Cardiac septum (tissue), 1 donor: ENCODE measurements at regions of chr1 and their contacts with region 1.

Region 1: DNA sequence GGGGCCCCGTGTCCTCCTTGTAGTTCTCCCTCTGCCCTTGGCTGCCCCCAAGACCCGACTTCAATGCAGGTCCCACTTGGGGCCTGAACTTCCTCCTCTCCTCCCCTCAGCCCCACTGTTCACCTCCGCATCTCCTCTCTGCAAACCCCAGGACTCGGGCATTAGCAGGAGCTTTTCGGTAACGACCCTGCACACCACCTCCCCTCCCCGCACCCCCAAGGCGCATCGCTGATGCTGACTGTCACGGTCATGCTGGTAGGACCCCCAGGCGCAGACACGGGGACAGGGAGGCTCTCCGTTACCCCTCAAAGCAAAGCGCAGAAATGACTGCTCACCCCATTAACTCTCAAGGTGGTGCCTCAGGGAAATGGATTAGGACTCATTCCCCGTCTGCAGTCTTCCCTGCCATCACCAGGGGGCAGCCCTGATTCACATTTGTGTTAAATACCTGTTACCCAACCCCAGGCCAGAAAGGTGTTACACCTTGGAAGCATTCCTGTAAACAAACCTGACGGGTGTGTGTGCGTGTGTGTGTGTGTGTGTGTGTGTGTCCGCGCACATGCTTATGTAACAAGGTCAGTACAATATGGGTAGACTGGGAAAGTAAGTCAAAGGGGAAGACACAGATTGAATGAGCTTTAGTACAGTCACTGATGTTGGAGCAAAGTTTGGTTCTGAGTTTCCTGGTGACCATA is 6.4 kb upstream of the GUCA2B start:
- DNase-seq: no peak

Region 2: GRCh38 chr1:42173155-42173933 is 26.6 kb after region 1 on chr1:
- intact Hi-C with region 1: loop called (anchors 1 kb)
- DNase-seq: peak; percentile 87

Region 3: GRCh38 chr1:42747125-42747524 is 600.4 kb after region 1 on chr1:
- intact Hi-C with region 1: loop called (anchors 5 kb)
- DNase-seq: peak; percentile 61